Activated CD4-positive, alpha-beta T cell treated with anti-CD3 and anti-CD28 coated beads, Interleukin-2, amount 10 ng/mL, durations not matched to agents 7 days and 5 days (primary cell): ENCODE measurements at regions of chr13 and their contacts with region 1.

Region 1: GRCh38 chr13:46552889-46553510 is at the start of gene LRCH1:
- DNase-seq: peak; percentile 89
- H3K4me3 Mint-ChIP-seq: peak within 1 kb of the TSS; percentile 93
- H3K27ac Mint-ChIP-seq: peak within 1 kb of the TSS; percentile 89
- H3K4me1 Mint-ChIP-seq: peaks cover 47% of the 10 kb centered on the region
- H3K27me3 Mint-ChIP-seq: no peaks in the 10 kb centered on the region
- total RNA-seq, gene LRCH1: 17.4 to 18.2 TPM

Region 2: GRCh38 chr13:45932676-45933075 is 620.3 kb before region 1 on chr13:
- CTCF ChIA-PET with region 1: no interaction called
- POLR2A ChIA-PET with region 1: no interaction called
- DNase-seq: no peak
- H3K4me3 Mint-ChIP-seq: no peak overlapping the region
- H3K27ac Mint-ChIP-seq: no peak overlapping the region
- H3K4me1 Mint-ChIP-seq: no peaks in the 10 kb centered on the region
- H3K27me3 Mint-ChIP-seq: no peaks in the 10 kb centered on the region

Region 3: DNA sequence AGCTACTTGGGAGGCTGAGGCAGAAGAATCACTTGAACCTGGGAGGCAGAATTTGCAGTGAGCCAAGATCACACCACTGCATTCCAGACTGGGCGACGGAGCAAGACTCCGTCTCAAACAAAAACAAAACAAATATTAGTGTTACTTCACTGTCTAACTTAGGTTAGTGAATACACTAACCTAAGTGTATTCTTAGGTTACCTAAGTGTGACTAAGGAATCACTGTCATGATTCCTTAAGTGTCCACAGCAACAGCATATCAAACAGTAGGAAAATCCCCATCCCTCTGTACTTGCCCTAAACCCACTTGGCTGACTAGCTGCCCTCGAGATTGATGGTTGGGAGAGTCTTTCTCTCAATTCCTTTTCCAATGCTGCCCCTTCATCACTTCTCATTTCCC is 11.8 kb before region 1 on chr13:
- CTCF ChIA-PET with region 1: interaction called, 11 read pairs
- POLR2A ChIA-PET with region 1: no interaction called
- DNase-seq: no peak
- H3K4me3 Mint-ChIP-seq: no peak overlapping the region
- H3K27ac Mint-ChIP-seq: no peak overlapping the region
- H3K4me1 Mint-ChIP-seq: peaks cover 7% of the 10 kb centered on the region
- H3K27me3 Mint-ChIP-seq: peaks cover 6% of the 10 kb centered on the region